HEK293T (cell line): ENCODE measurements at regions of chr19 and their contacts with region 1.

Region 1: DNA sequence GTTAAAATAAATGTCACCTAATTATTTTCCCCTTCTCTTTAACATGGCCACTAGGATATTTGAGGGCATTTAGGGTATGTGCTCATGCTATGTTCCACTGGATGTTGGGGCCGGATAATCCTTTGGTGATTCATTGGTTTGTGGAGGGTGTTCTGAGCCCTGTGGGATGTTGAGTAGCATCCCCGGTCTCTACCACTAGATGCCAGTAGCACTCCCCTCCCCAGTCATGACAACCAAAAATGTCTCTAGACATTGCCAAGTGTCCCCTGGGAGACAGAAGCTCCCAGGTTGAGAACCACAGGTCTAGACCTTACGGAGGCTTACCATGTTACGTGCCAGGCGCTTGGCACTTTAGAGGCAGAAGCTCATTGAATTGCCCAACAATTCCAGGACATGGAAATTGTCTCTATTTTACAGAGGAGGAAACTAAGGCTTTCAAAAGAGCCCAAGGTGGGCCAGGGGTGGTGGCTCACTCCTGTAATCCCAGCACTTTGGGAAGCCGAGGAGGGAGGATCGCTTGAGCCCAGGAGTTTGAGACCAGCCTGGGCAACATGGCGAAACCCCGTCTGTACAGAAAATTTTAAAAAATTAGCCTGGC is 14.1 kb downstream of the SHANK1 start:
- DNase-seq: peak; percentile 72

Region 2: GRCh38 chr19:50679177-50680125 is 26.1 kb before region 1 on chr19:
- CTCF ChIA-PET with region 1: no interaction called
- POLR2A ChIA-PET with region 1: no interaction called
- DNase-seq: peak; percentile 99

Region 3: DNA sequence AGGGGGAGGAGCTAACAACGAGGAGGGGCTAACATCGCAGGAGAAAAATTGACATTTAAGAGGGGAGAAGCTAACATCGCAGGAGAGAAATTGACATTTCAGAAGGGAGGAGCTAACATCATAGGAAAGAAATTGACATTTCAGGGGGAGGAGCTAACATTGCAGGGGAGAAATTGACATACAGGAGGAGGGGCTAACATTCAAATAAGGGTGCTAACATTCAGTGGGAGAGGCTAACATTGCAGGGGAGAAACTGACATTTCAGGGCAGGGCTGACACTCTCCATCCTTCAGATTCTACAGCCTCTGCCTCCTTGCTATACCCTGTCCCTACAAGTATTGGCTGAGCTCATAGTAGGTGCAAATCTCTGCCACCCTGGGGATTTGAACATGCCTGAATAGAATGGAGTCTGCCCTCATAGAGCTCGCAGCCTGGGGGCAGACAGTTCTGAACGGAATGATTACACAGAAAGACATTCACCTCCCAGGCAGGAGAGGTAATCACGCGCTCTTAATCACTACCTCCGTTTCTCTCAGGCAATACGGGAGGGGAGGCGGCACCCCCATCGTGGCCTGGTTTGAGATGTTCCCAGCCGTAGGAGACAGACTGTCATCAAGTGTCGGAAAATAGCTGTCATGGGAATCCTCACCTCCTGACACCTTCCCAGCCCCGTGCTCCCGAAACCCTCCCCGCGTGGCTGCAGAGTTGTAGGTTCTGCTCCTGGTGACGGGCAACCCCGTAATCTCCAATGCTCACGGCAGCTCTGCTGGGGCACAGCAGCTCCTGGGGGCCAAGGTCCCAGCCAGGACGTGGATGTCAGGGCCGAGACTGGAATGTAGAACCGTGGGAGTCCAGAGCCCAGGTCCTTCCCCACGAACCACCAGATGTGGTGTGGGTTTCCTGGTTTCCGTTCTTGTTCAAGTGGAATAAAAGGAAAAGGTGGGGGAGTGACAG is 74.3 kb after region 1 on chr19:
- CTCF ChIA-PET with region 1: interaction called, 12 read pairs
- POLR2A ChIA-PET with region 1: interaction called, 4 read pairs
- DNase-seq: no peak